A549 (cell line): ENCODE measurements at regions of chr11 and their contacts with region 1.

Region 1: DNA sequence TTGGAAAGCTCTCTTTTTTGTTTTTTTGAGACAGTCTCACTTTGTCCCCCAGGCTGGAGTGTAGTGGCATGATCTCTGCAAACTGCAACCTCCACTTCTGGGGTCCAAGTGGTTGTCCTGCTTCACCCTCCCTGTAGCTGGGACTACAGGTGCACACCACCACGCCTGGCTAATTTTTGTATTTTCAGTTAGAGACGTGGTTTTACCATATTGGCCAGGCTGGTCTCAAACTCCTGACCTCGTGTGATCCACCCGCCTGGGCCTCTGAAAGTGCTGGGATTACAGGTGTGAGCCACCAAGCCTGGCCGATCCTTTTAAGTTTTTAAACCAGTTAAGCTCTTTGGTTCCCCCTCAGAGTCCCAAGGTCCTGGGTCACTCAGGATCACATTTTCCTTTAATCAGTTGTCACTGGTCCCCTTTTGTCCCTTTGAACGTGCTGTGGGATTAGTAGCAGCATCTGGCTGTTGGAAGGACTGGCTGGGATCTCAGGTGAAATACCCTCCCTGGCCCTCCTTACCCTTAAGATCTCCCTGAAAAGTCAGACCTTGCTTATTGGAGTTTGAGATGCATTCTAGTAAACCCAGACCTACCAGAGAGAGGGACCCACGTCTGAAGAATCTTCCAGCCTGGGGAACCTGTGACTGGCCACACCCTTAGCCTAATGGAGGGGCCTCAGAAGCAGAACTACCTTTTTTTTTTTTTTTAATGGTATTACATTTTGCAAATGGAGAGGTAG is 8.1 kb downstream of the MALAT1 start:
- DNase-seq: no peak
- ATAC-seq: peak; percentile 45 to 70
- H3K4me3 ChIP-seq: peak overlapping the region; percentile 90
- H3K27ac ChIP-seq: peak overlapping the region; percentile 89 to 100
- H3K4me1 ChIP-seq: peaks cover 22% of the 10 kb centered on the region
- CTCF ChIP-seq: no peak
- EP300 ChIP-seq: no peak
- POLR2A ChIP-seq: peak; percentile 20; the same call in 1 of the 2 replicates
- RAD21 ChIP-seq: no peak

Region 2: DNA sequence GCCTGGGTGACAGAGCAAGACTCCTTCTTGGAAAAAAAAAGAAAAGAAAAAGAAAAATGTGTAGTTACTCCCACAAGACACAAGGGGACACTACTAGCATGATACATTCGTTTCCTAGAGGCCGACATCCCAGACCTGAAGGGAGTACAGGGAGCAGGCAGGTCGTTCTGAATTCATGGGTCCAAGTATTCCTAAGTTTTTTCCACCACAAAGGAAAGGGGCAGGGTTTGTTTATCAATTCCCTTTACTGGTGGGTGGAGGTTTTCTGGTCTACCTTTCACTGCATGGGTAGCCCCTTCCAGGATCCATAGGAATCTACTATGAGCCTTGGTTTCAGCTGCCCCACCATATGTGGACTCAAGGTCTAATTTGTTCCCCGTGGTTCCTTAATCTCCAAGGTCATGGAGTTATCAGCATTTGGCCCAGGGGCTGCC is 140.6 kb before region 1 on chr11:
- CTCF ChIA-PET with region 1: interaction called, 35 read pairs
- POLR2A ChIA-PET with region 1: interaction called, 8 read pairs
- DNase-seq: peak; percentile 88 to 90
- ATAC-seq: peak; percentile 84 to 85
- H3K4me3 ChIP-seq: no peak overlapping the region
- H3K27ac ChIP-seq: peak overlapping the region; percentile 45 to 72; a peak in 5 of 6 replicates
- H3K4me1 ChIP-seq: peaks cover 18% of the 10 kb centered on the region
- CTCF ChIP-seq: peak; percentile 85
- EP300 ChIP-seq: no peak
- POLR2A ChIP-seq: no peak
- RAD21 ChIP-seq: peak; percentile 91 to 96

Region 3: GRCh38 chr11:65382033-65382807 is 124.7 kb before region 1 on chr11 and contains the start of gene SLC25A45:
- CTCF ChIA-PET with region 1: interaction called, 63 read pairs
- POLR2A ChIA-PET with region 1: interaction called, 9 read pairs
- DNase-seq: peak; percentile 78 to 98
- ATAC-seq: peak; percentile 88 to 90
- H3K4me3 ChIP-seq: peak within 1 kb of the TSS; percentile 46
- H3K27ac ChIP-seq: peak within 1 kb of the TSS; percentile 93 to 99
- H3K4me1 ChIP-seq: peaks cover 80% of the 10 kb centered on the region
- CTCF ChIP-seq: peak; percentile 52; the same call in 2 of the 3 replicates
- EP300 ChIP-seq: peak; percentile 19 to 35; a peak in 3 of 5 replicates
- POLR2A ChIP-seq: no peak; the same call in none of the 2 replicates
- RAD21 ChIP-seq: peak; percentile 75 to 81
- polyA plus RNA-seq, gene SLC25A45: 3.1 and 4.9 TPM in 2 replicates

Region 4: GRCh38 chr11:65440831-65441499 is 66.0 kb before region 1 on chr11:
- CTCF ChIA-PET with region 1: interaction called, 36 read pairs
- POLR2A ChIA-PET with region 1: interaction called, 68 read pairs
- DNase-seq: peak in 1 of 2 experiments; percentile 38
- ATAC-seq: no peak
- H3K4me3 ChIP-seq: no peak overlapping the region
- H3K27ac ChIP-seq: peak overlapping the region; percentile 23 to 65; a peak in 3 of 6 replicates
- H3K4me1 ChIP-seq: peaks cover 94% of the 10 kb centered on the region
- CTCF ChIP-seq: no peak
- EP300 ChIP-seq: no peak
- POLR2A ChIP-seq: no peak
- RAD21 ChIP-seq: no peak

Region 5: GRCh38 chr11:65487413-65488272 is 19.3 kb before region 1 on chr11:
- CTCF ChIA-PET with region 1: interaction called, 94 read pairs
- POLR2A ChIA-PET with region 1: interaction called, 496 read pairs
- DNase-seq: peak; percentile 99 to 100
- ATAC-seq: peak; percentile 75 to 83
- H3K4me3 ChIP-seq: 0 out of 3 replicates have a peak overlapping the region, but pooled peaks have one; percentile 3
- H3K27ac ChIP-seq: peak overlapping the region; percentile 99 to 100
- H3K4me1 ChIP-seq: peaks cover 82% of the 10 kb centered on the region
- CTCF ChIP-seq: no peak
- EP300 ChIP-seq: peak in 1 of 2 experiments; percentile 51; a peak in 2 of 5 replicates
- POLR2A ChIP-seq: no peak
- RAD21 ChIP-seq: no peak; a peak in 1 of 5 replicates

Region 6: DNA sequence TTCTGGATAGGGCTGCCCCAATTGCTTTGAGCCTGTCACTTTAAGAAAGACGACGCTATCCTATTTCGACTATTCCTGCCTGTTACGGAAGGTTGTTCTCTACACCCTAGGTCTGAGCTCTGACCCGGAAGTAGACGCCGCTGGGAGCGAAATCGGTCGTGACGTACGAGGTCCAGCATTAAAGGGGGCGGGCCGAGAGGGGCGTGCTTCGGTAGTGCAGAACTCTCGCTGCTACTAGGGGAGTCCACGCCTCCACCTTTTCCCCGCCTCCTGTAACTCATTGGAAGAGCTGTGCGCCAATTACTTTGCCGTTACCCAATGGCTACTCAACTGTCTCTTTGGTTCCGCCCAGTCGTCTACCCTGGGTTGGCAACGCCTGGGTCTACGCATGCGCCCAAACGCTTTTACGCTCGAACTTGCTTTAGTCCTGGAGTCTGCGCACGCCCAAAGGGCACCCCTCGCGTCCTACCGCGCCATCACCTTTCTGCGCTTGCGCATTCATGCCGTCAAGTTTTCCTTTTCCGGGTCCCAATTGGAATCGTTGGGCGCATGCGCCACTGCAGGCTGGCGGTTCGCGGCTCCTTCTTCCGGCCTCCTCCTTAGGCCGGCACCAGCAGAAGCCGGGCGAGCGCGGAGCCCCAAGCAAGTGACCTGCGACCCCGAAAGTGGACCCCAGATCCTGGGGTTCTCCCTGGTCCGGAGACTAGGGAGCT is 108.4 kb after region 1 on chr11 and contains the start of gene PCNX3:
- CTCF ChIA-PET with region 1: interaction called, 3 read pairs
- POLR2A ChIA-PET with region 1: interaction called, 10 read pairs
- DNase-seq: peak; percentile 100
- ATAC-seq: peak; percentile 78 to 86
- H3K4me3 ChIP-seq: peak within 1 kb of the TSS; percentile 92
- H3K27ac ChIP-seq: peak within 1 kb of the TSS; percentile 96 to 98
- H3K4me1 ChIP-seq: peaks cover 39% of the 10 kb centered on the region
- CTCF ChIP-seq: no peak
- EP300 ChIP-seq: no peak
- POLR2A ChIP-seq: peak; percentile 45
- RAD21 ChIP-seq: no peak
- polyA plus RNA-seq, gene PCNX3: 14.2 and 17.2 TPM in 2 replicates

Region 7: DNA sequence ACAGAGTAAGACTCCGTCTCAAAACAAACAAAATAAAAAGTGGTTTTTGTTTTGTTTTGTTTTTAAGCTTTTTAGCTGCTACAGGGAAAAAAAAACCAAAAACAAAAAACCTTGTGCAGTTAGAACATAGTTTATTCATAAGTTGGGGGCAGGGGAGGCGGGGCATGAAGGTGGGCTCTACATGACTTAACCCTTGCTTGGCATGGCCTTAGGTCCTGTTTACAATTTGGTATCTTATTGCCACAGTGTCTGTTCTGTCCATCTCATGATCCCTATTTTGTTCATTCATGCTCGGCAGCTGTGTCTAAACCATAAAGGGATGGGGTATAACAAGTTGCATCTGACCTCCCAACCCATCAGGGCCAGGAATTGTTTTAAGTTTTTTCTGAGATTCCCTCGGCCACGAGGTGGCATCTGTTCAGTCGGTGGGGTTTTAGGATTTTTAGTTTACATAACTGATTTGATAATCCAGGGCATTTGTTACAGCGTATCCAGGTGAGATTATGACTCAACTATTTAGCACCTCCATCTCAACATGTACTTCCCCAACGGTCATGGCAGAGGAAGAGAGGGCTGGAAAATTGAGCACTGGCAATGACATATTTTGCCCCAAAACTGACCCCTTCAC is 267.0 kb after region 1 on chr11:
- CTCF ChIA-PET with region 1: no interaction called
- POLR2A ChIA-PET with region 1: no interaction called
- DNase-seq: no peak
- ATAC-seq: no peak
- H3K4me3 ChIP-seq: no peak overlapping the region
- H3K27ac ChIP-seq: no peak overlapping the region
- H3K4me1 ChIP-seq: peaks cover 3% of the 10 kb centered on the region; the same call in 2 of the 3 replicates
- CTCF ChIP-seq: no peak
- EP300 ChIP-seq: no peak
- POLR2A ChIP-seq: no peak
- RAD21 ChIP-seq: no peak